Activated CD8-positive, alpha-beta T cell treated with anti-CD3 and anti-CD28 coated beads for 36 hours (primary cell): ENCODE measurements at regions of chrX and their contacts with region 1.

Region 1: GRCh38 chrX:136162831-136163570 is 15.7 kb downstream of the FHL1 start:
- DNase-seq: peak; percentile 63
- ATAC-seq: peak; percentile 79
- H3K4me3 Mint-ChIP-seq: no peak overlapping the region
- H3K27ac Mint-ChIP-seq: no peak overlapping the region
- H3K4me1 Mint-ChIP-seq: no peaks in the 10 kb centered on the region
- H3K27me3 Mint-ChIP-seq: no peaks in the 10 kb centered on the region
- CTCF ChIP-seq: peak; percentile 59

Region 2: DNA sequence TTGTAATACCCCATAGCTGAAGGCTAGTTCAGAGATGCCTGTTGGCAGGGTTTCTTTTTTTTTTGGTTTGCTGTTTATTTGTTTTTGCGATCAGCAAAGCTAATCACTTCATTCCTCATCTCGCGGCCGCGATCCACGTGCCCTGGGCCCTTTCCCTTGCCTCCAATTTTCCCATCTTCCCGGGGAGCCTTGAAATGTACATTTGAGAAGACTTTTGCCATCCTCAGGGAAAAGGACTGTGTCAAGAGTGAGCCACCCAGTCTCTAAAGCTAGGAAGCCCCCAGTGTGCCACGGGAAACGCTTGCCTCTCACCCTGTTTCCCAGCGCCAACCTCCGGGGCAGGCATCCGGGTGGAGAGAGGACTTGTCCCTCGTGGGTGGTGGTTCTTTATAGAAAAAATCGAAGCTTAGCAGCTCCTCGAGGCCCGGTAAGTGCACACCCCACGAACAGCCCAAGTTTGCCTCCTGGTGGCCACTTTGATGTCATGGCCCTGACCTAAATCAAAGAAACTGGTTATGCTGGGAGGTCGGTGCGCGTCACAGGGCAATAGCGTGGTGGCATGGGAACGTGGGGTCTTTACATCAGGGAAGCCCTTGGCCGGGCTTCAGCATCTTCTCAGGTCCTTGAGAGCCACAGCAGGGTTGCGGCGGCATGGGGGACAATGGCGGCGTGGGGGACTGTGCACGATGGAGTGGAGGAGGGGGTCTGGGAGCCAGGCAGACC is 46.2 kb after region 1 on chrX:
- CTCF ChIA-PET with region 1: interaction called, 14 read pairs
- POLR2A ChIA-PET with region 1: no interaction called
- intact Hi-C with region 1: no loop called
- DNase-seq: peak; percentile 41
- ATAC-seq: no peak
- H3K4me3 Mint-ChIP-seq: no peak overlapping the region
- H3K27ac Mint-ChIP-seq: no peak overlapping the region
- H3K4me1 Mint-ChIP-seq: peaks cover 10% of the 10 kb centered on the region
- H3K27me3 Mint-ChIP-seq: no peaks in the 10 kb centered on the region
- CTCF ChIP-seq: no peak